HepG2 (cell line): ENCODE measurements at regions of chr20 and their contacts with region 1.

Region 1: DNA sequence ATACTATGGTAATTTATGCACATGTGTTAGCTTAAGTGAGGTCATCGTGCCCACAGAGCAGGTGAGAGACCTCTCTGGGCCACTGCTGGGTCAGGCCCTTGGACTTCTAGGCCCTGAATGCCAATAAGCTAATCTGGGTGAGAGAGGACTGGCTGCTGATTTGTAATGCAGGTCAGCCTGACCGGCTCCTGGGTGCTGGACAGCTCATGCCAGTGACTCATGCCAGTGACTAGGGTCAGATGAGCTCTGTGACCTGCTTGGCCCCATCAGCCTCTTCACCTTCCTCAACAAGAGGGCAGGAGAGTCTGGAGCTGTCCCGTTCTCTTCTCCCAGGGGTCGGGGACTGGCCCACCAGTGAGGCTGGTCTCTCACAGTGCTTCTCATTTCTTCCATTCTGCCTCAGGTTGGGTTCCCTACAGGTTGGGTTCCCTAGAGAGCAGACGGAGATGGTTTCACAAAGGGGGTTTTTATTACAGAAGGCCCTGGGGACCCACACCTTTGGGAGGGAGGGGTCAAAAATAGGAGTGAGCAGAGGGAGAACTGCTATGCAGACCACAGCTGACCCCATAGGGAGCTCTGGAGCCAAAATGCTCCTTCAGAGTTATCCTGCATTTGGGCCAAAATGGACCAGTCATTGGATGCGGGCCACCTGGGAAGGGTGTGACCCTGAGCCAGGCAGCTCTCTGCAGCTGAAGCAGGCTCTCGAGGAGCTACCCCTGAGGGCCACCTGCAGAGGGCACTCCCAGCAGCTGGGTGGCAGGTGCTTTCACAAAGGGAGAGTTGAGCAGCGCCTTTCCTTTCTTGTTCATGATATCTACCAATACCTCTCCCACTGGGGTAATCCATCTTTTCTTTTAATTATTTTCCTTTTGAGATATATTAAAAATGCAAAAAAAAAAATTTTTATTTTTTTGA is 2.2 kb upstream of the OXT start:
- DNase-seq: peak; percentile 55
- ATAC-seq: peak; percentile 79
- H3K4me3 ChIP-seq: no peak overlapping the region
- H3K27ac ChIP-seq: no peak overlapping the region
- H3K4me1 ChIP-seq: peaks cover 74% of the 10 kb centered on the region
- H3K27me3 ChIP-seq: peaks cover 4 to 23% of the 10 kb centered on the region in 2 experiments; a peak in 4 of 5 replicates
- CTCF ChIP-seq: peak; percentile 82
- EP300 ChIP-seq: no peak
- POLR2A ChIP-seq: no peak
- RAD21 ChIP-seq: peak; percentile 73

Region 2: GRCh38 chr20:2991532-2991931 is 77.7 kb before region 1 on chr20:
- CTCF ChIA-PET with region 1: no interaction called
- POLR2A ChIA-PET with region 1: no interaction called
- in situ Hi-C with region 1: no loop called
- intact Hi-C with region 1: no loop called
- DNase-seq: no peak
- ATAC-seq: no peak
- H3K4me3 ChIP-seq: no peak overlapping the region
- H3K27ac ChIP-seq: no peak overlapping the region
- H3K4me1 ChIP-seq: no peaks in the 10 kb centered on the region
- H3K27me3 ChIP-seq: no peaks in the 10 kb centered on the region
- CTCF ChIP-seq: no peak
- EP300 ChIP-seq: no peak
- POLR2A ChIP-seq: no peak
- RAD21 ChIP-seq: no peak

Region 3: DNA sequence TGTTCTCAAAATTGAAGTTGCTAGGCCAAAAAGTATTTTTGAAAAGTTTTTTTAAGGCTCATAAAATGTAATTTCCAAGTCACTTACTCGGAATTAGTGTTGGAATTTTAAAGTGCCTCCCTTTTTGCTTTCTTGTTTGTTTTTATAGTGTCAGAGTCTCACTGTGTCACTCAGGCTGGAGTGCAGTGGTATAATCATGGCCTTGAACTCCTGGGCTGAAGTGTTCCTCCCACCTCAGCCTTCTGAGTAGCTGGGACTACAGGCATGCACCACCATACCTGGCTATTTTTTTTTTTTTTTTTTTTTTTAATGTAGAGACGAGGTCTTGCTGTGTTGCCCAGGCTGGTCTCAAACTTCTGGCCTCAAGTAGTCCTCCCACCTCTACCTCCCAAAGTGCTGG is 65.8 kb before region 1 on chr20:
- CTCF ChIA-PET with region 1: no interaction called
- POLR2A ChIA-PET with region 1: no interaction called
- in situ Hi-C with region 1: no loop called
- intact Hi-C with region 1: no loop called
- DNase-seq: peak; percentile 74
- ATAC-seq: peak; percentile 90
- H3K4me3 ChIP-seq: no peak overlapping the region
- H3K27ac ChIP-seq: peak overlapping the region; percentile 4
- H3K4me1 ChIP-seq: peaks cover 10% of the 10 kb centered on the region
- H3K27me3 ChIP-seq: no peaks in the 10 kb centered on the region
- CTCF ChIP-seq: no peak
- EP300 ChIP-seq: no peak
- POLR2A ChIP-seq: no peak
- RAD21 ChIP-seq: no peak

Region 4: GRCh38 chr20:3045816-3046676 is 23.2 kb before region 1 on chr20 and contains the start of gene MRPS26:
- CTCF ChIA-PET with region 1: no interaction called
- POLR2A ChIA-PET with region 1: interaction called, 10 read pairs
- in situ Hi-C with region 1: no loop called
- intact Hi-C with region 1: no loop called
- DNase-seq: peak; percentile 91
- ATAC-seq: peak; percentile 95
- H3K4me3 ChIP-seq: peak within 1 kb of the TSS; percentile 89 to 97 (median 95)
- H3K27ac ChIP-seq: peak within 1 kb of the TSS; percentile 85
- H3K4me1 ChIP-seq: peaks cover 42% of the 10 kb centered on the region
- H3K27me3 ChIP-seq: no peaks in the 10 kb centered on the region; a peak in 1 of 5 replicates
- CTCF ChIP-seq: peak; percentile 57
- EP300 ChIP-seq: peak in 1 of 2 experiments; percentile 2; a peak in 1 of 4 replicates
- POLR2A ChIP-seq: peak; percentile 77 to 94
- RAD21 ChIP-seq: peak; percentile 65
- total RNA-seq, gene MRPS26: 187 and 201 TPM in 2 replicates

Region 5: DNA sequence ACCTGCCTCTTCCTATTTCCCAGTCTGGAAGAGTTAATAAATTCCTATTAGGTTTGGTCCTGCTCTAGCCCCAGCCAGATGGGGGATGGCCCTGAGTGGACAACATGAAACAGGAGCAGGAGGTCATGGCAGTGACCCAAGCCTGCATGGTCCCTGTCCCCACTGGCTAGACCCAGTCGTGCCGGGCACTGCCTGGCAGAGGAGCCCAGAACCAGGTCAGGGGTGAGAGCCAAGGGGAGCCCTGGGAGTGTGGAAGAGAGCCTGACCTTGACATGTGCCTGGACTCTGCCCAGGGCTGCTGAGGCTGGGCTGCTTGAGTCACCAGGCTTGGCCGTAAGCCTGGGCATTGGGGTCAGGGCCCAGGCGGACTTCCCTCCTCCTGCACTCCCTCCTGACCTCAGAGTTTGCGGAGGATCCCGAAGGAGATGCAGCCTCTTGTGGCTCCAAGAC is 11.7 kb after region 1 on chr20:
- CTCF ChIA-PET with region 1: no interaction called
- POLR2A ChIA-PET with region 1: no interaction called
- in situ Hi-C with region 1: no loop called
- intact Hi-C with region 1: no loop called
- DNase-seq: no peak
- ATAC-seq: peak; percentile 37
- H3K4me3 ChIP-seq: peak overlapping the region in 1 of 3 experiments; percentile 27; a peak in 1 of 6 replicates
- H3K27ac ChIP-seq: no peak overlapping the region
- H3K4me1 ChIP-seq: peaks cover 64% of the 10 kb centered on the region
- H3K27me3 ChIP-seq: peaks cover 27 to 57% of the 10 kb centered on the region in 2 experiments
- CTCF ChIP-seq: no peak
- EP300 ChIP-seq: peak in 1 of 2 experiments; percentile 11; a peak in 1 of 4 replicates
- POLR2A ChIP-seq: no peak
- RAD21 ChIP-seq: no peak

Region 6: GRCh38 chr20:3106658-3107463 is 37.6 kb after region 1 on chr20:
- CTCF ChIA-PET with region 1: no interaction called
- POLR2A ChIA-PET with region 1: no interaction called
- in situ Hi-C with region 1: no loop called
- intact Hi-C with region 1: no loop called
- DNase-seq: peak; percentile 68
- ATAC-seq: peak; percentile 43
- H3K4me3 ChIP-seq: peak overlapping the region in 1 of 3 experiments; percentile 24; a peak in 1 of 6 replicates
- H3K27ac ChIP-seq: peak overlapping the region; percentile 56
- H3K4me1 ChIP-seq: peaks cover 63% of the 10 kb centered on the region
- H3K27me3 ChIP-seq: no peaks in the 10 kb centered on the region
- CTCF ChIP-seq: peak; percentile 36
- EP300 ChIP-seq: peak in 1 of 2 experiments; percentile 83; a peak in 2 of 4 replicates
- POLR2A ChIP-seq: peak; percentile 42 to 49; a peak in 2 of 4 replicates
- RAD21 ChIP-seq: no peak